ENCODE measurements at regions of chr12 and their contacts with region 1.

Region 1: DNA sequence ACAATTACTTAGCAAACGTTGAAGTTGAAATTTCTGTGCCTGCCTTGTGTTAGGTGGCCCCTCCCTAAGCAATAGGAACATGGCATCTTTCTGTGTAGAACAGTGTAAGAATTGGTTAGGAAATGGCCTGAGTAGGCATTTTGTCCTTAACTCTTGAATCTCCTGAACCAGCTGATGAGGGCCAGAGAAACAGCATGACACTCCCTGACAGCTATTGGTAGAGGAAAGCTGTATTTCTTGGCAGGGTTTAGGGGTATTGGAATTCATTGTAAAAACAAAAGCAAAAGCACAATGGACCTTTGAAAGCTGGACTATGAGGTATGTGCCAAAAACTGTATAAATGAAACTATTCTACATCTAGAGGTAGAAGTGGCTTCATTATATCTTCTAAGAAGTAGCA is 40.6 kb upstream of the LRTM2 start:
- ATAC-seq: peak in 2 of 8 experiments; percentile 18 to 21
- H3K4me3 ChIP-seq: no peak overlapping the region
- H3K27ac ChIP-seq: no peak overlapping the region
- H3K4me1 ChIP-seq: peaks cover 11 to 19% of the 10 kb centered on the region in 2 donors

Region 2: DNA sequence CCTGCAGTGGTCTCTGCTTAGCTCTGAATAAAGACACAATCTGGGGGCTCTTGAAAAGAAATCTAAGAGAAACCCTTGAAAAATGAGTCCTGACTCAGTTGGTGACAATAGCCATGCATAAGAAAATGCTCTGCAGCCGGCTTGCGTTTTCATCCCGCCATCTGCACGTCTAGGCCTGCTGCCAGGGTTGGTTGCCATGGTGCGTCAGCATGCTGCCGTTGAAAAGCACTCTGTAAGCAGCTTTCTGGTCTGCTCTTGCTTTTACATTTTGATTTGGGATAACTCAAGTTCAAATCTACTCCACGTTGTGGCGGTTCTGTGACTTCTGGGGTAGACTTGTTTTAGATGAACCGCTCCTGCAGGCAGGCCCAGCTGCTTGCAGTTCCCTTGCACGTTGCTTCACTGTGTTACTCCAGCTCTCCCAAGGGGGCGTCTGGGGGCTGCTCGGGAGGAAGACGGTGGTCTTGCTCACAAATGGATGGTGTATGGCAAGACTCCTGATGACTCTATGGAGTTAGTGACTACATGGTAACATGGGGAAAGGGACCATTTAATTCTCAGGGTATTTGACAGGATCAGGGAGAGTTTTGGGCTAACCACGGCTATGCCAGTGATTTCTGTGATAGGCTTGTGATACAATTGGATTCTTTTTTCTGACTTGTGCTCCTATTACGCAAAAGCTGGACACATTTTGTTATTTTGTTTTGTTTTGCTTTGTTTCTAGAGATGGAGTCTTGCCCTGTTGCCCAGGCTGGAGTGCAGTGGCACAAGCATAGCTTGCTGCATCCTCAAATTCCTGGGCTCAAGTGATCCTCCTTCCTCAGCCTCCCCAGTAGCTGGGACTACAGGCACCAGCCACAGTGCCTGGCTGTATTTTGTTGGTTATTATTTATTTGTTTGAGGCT is 135.0 kb before region 1 on chr12:
- in situ Hi-C with region 1: loop called in 5 of 9 experiments (anchors 10 to 25 kb)
- ATAC-seq: peak; percentile 84 to 96 (median 90)
- H3K4me3 ChIP-seq: no peak overlapping the region
- H3K27ac ChIP-seq: peak overlapping the region; percentile 12 to 86
- H3K4me1 ChIP-seq: peaks cover 12 to 22% of the 10 kb centered on the region in 2 donors

Region 3: DNA sequence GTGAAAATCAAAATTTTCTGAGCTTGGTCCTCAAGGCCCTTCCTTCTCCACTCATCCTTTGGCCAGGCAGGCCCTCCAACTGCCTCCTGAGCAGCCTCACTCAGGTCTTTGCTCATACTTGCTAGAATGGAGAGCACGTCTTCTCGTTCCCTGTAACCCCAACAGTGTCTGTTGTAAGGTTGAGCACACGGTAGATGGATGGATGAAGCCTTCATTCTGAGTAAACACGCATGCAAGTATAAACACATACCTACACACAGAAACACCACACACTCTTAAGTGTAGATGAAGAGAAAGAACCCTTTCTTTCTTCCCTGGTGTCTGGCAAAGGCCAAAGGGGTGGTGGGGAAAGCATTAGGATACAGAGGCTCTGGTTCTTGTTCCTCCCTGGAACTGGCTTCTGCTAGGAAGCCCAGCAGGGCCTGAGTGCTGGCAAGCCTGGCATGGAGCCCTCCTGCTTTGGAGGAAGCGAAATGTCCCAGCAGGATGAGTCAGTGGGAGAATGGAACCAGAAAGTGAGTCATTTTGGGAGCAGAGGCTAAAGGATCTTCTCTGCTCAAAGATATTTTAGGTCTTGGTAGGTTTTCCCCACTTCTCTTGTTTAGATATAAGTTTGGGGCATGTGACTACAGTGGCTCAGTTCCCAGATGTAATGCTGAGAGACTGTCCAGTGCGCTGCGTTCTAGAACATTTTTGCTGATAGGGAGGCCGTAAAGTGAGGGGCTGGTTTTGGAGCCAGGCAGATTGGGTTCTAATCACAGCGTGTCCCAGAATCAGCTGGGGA is 400.4 kb after region 1 on chr12:
- in situ Hi-C with region 1: no loop called
- ATAC-seq: peak in 2 of 8 experiments; percentile 73 to 86
- H3K4me3 ChIP-seq: no peak overlapping the region
- H3K27ac ChIP-seq: no peak overlapping the region
- H3K4me1 ChIP-seq: peaks cover 0 to 7% of the 10 kb centered on the region in 2 donors

Measured in motor neuron (in vitro differentiated cells).